Posterior vena cava (tissue), 2 donors: ENCODE measurements at regions of chr2 and their contacts with region 1.

Region 1: GRCh38 chr2:126769118-126769517 is 113.2 kb downstream of the GYPC start:
- DNase-seq: peak; percentile 24

Region 2: DNA sequence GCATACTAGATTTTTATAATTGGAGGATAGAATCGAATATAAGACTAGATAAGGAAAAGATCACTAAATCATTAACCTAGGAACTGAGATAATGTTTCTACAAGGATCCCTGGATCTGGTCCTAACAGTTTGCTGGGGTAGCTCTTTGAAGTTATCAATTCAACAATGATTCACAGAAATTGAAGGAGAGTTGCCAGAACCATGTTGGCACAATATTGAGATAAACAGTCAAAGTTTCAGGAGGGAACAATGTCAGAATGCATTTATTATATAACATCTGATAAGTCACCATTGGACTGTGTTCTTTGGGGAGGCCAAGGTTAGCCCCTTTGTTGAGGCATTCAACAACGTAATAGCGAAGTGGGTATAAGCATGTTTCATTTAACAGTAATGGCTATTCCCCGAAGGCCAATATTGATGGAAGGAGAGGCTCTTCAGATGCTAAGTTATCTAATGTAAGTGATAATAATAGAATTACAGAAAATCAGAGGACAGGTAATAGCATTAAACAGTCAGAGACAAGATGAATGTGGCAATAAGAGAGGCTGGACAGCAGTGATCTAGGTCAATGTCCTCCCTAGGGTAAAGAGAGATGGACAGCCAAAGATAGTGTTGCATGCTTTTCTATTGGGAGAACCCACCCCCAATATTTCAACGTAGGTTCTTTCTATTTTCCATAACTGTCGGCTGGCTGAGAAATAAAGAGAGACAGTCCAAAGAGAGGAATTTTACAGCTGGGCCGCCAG is 718.0 kb before region 1 on chr2:
- intact Hi-C with region 1: loop called in 1 of 2 experiments (anchors 5 kb)
- DNase-seq: no peak

Region 3: DNA sequence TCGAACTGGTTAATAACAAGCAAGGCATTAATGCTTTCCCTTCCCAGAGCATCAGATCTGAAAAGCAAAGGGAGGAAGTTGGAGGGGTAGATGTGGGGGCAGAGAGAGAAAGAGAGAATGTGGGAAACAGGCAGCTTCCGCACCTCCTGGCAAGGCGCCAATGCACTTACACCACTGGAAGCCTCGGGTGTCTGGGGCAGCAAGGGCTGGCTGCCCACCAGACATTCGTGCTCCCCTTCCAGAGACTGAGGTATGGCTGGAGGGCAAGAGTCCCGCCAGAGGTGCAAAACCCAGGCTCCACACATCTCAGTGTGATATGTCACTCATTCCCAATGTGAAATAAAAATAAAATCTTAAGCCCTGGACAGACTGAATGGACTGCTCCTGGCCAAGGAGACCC is 176.0 kb after region 1 on chr2:
- intact Hi-C with region 1: no loop called
- DNase-seq: no peak

Region 4: DNA sequence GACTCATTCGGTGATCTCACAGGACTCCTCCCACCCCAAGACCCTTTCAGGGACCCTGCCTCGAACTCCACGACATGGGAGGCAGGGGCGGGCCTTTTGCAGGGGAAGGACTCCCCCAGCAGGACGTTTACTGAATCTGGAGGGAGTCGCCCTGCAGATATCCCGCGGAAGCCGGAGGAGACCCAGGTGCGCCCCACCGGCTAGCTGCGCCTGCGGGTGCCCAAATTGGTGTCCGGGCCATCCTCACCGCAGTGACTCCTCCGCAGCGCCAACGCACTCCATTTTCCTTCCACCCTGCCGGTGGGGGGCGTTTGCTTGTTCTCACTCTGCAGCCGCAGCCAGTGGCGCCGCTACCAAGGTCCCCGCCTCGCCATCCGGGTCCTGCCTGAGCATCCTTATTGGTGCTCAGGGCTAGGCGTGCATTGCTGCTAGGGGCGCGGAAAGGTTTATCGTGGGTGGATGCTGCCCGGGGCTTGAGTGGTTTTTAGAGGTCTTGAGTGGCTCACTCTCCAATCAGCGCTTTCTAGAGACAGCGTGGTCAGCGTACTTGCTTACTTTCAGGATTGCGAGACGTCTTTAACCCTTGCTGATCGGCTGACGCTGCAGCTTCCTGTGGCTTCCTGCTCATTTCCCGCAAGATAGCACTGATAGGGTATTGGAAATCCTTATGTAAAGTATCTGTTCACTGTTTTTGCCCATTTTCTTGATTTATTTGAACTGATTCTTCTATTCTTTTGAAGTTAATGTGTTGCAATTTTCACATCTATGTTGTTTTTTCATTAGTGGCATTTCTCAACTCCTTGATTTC is 256.4 kb after region 1 on chr2:
- intact Hi-C with region 1: no loop called
- DNase-seq: peak; percentile 93